B cell (primary cell): ENCODE measurements at regions of chr5 and their contacts with region 1.

Region 1: GRCh38 chr5:134225618-134226440 is at the start of gene PPP2CA:
- DNase-seq: peak; percentile 100
- ATAC-seq: peak; percentile 77
- H3K4me3 ChIP-seq: peak within 1 kb of the TSS; percentile 87 to 100 (median 98)
- H3K4me3 Mint-ChIP-seq: peak within 1 kb of the TSS; percentile 94
- H3K27ac ChIP-seq: peak within 1 kb of the TSS; percentile 95 to 100
- H3K27ac Mint-ChIP-seq: peak within 1 kb of the TSS; percentile 99
- H3K4me1 ChIP-seq: peaks cover 36% of the 10 kb centered on the region in 2 donors
- H3K4me1 Mint-ChIP-seq: peaks cover 51% of the 10 kb centered on the region
- H3K27me3 ChIP-seq: no peaks in the 10 kb centered on the region
- H3K27me3 Mint-ChIP-seq: no peaks in the 10 kb centered on the region
- CTCF ChIP-seq: peak; percentile 27
- total RNA-seq, gene PPP2CA: 86.2 and 100 TPM in 2 replicates

Region 2: DNA sequence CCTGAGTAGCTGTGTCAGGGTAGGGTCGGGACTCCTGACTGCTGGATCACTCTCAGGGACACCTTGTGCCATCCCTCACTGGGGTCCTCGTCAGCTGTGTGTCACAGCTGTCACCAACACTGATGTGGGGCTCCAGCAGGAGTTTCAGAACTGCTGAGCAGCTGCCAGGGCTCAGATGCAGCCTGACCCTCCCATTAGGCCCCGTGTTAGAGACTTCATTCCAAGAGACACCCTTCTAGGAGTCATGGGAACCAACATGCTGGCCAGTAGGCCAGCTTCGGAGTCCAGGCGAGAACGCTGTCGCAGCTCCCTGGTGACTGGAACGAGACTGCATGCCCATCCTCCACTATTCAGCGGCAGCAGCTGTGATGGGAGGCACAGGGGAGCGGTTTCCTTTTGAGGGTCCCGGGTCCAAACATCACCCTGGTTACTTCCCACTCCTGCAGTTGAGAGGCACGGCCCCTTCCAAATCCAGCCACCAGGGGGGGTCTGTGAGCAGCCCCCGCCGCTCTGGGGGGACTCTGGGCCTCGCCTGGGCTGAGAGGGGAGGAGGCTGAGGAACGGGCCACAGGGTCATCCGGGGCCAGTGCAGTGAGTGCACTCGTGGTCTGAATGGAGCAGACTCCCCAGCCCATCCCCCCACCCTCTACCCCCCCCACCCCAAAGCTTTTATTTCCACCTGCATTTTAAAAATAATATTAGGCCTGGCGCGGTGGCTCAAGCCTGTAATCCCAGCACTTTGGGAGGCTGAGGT is 124.0 kb before region 1 on chr5:
- CTCF ChIA-PET with region 1: interaction called, 4 read pairs
- POLR2A ChIA-PET with region 1: interaction called, 5 read pairs
- intact Hi-C with region 1: loop called (anchors 1 kb)
- DNase-seq: peak; percentile 82
- ATAC-seq: peak; percentile 53
- H3K4me3 ChIP-seq: no peak overlapping the region
- H3K4me3 Mint-ChIP-seq: peak overlapping the region; percentile 34
- H3K27ac ChIP-seq: peak overlapping the region; percentile 76 to 88
- H3K27ac Mint-ChIP-seq: peak overlapping the region; percentile 96
- H3K4me1 ChIP-seq: peaks cover 31 to 47% of the 10 kb centered on the region in 2 donors
- H3K4me1 Mint-ChIP-seq: peaks cover 46% of the 10 kb centered on the region
- H3K27me3 ChIP-seq: no peaks in the 10 kb centered on the region
- H3K27me3 Mint-ChIP-seq: no peaks in the 10 kb centered on the region
- CTCF ChIP-seq: peak; percentile 86

Region 3: GRCh38 chr5:134161513-134162395 is 64.1 kb before region 1 on chr5:
- CTCF ChIA-PET with region 1: no interaction called
- POLR2A ChIA-PET with region 1: no interaction called
- intact Hi-C with region 1: no loop called
- DNase-seq: no peak
- ATAC-seq: no peak
- H3K4me3 ChIP-seq: no peak overlapping the region
- H3K4me3 Mint-ChIP-seq: no peak overlapping the region
- H3K27ac ChIP-seq: no peak overlapping the region
- H3K27ac Mint-ChIP-seq: no peak overlapping the region
- H3K4me1 ChIP-seq: no peaks in the 10 kb centered on the region
- H3K4me1 Mint-ChIP-seq: no peaks in the 10 kb centered on the region
- H3K27me3 ChIP-seq: no peaks in the 10 kb centered on the region
- H3K27me3 Mint-ChIP-seq: no peaks in the 10 kb centered on the region
- CTCF ChIP-seq: no peak

Region 4: GRCh38 chr5:134184155-134185135 is 41.4 kb before region 1 on chr5:
- CTCF ChIA-PET with region 1: interaction called, 15 read pairs
- POLR2A ChIA-PET with region 1: interaction called, 3 read pairs
- intact Hi-C with region 1: no loop called
- DNase-seq: peak; percentile 83
- ATAC-seq: peak; percentile 99
- H3K4me3 ChIP-seq: no peak overlapping the region
- H3K4me3 Mint-ChIP-seq: no peak overlapping the region
- H3K27ac ChIP-seq: no peak overlapping the region
- H3K27ac Mint-ChIP-seq: no peak overlapping the region
- H3K4me1 ChIP-seq: peaks cover 0 to 6% of the 10 kb centered on the region in 2 donors
- H3K4me1 Mint-ChIP-seq: peaks cover 5% of the 10 kb centered on the region
- H3K27me3 ChIP-seq: no peaks in the 10 kb centered on the region
- H3K27me3 Mint-ChIP-seq: no peaks in the 10 kb centered on the region
- CTCF ChIP-seq: peak; percentile 96

Region 5: GRCh38 chr5:134446938-134447337 is 221.1 kb after region 1 on chr5:
- CTCF ChIA-PET with region 1: no interaction called
- POLR2A ChIA-PET with region 1: no interaction called
- intact Hi-C with region 1: loop called (anchors 2 kb)
- DNase-seq: peak; percentile 84
- ATAC-seq: peak; percentile 86
- H3K4me3 ChIP-seq: peak overlapping the region in 1 of 5 experiments; percentile 38
- H3K4me3 Mint-ChIP-seq: peak overlapping the region; percentile 79
- H3K27ac ChIP-seq: peak overlapping the region; percentile 47 to 52
- H3K27ac Mint-ChIP-seq: peak overlapping the region; percentile 87
- H3K4me1 ChIP-seq: peaks cover 37 to 42% of the 10 kb centered on the region in 2 donors
- H3K4me1 Mint-ChIP-seq: peaks cover 56% of the 10 kb centered on the region
- H3K27me3 ChIP-seq: no peaks in the 10 kb centered on the region
- H3K27me3 Mint-ChIP-seq: no peaks in the 10 kb centered on the region
- CTCF ChIP-seq: no peak

Region 6: GRCh38 chr5:134637161-134637582 is 411.3 kb after region 1 on chr5:
- CTCF ChIA-PET with region 1: no interaction called
- POLR2A ChIA-PET with region 1: no interaction called
- intact Hi-C with region 1: loop called (anchors 2 kb)
- DNase-seq: no peak
- ATAC-seq: no peak
- H3K4me3 ChIP-seq: no peak overlapping the region
- H3K4me3 Mint-ChIP-seq: no peak overlapping the region
- H3K27ac ChIP-seq: no peak overlapping the region
- H3K27ac Mint-ChIP-seq: no peak overlapping the region
- H3K4me1 ChIP-seq: peaks cover under 1 to 4% of the 10 kb centered on the region in 2 donors
- H3K4me1 Mint-ChIP-seq: peaks cover 6% of the 10 kb centered on the region
- H3K27me3 ChIP-seq: no peaks in the 10 kb centered on the region
- H3K27me3 Mint-ChIP-seq: no peaks in the 10 kb centered on the region
- CTCF ChIP-seq: no peak

Region 7: DNA sequence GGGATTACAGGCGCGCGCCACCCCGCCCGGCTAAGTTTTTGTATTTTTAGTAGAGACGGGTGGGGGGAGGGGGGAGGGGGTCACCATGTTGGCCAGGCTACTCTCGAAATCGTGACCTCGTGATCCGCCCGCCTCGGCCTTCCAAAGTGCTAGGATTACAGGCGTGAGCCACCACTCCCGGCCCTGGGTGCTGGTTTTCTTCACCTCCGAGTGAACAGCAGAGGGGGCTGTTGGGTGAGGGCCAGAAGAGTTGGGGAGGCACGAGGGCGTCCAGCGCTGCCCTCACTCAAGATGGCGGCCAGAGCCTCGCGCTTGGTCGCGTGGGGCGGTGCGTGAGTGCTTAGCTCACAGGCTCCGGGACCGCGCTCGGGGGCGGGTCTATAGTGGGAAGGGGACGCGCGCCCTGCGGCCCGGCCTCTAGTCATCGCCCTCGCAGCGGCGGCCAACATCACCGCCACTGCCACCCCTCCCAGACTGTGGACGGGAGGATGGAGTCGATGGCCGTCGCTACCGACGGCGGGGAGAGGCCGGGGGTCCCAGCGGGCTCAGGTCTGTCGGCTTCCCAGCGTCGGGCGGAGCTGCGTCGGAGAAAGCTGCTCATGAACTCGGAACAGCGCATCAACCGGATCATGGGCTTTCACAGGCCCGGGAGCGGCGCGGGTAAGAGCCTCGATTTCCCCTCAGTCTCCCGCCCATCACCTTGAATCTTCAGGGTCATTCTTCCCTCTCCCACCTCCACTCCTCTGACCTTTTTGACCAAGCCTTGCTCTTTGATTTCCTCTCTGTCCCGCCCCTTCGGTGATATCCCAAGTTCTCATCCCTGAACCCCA is 512.5 kb after region 1 on chr5 and contains the start of gene CAMLG:
- CTCF ChIA-PET with region 1: no interaction called
- POLR2A ChIA-PET with region 1: interaction called, 3 read pairs
- intact Hi-C with region 1: loop called (anchors 1 kb)
- DNase-seq: peak; percentile 98
- ATAC-seq: peak; percentile 97
- H3K4me3 ChIP-seq: peak within 1 kb of the TSS; percentile 69 to 94 (median 89)
- H3K4me3 Mint-ChIP-seq: peak within 1 kb of the TSS; percentile 90
- H3K27ac ChIP-seq: peak within 1 kb of the TSS; percentile 77 to 89
- H3K27ac Mint-ChIP-seq: peak within 1 kb of the TSS; percentile 89
- H3K4me1 ChIP-seq: peaks cover 24 to 42% of the 10 kb centered on the region in 2 donors
- H3K4me1 Mint-ChIP-seq: peaks cover 33% of the 10 kb centered on the region
- H3K27me3 ChIP-seq: no peaks in the 10 kb centered on the region
- H3K27me3 Mint-ChIP-seq: no peaks in the 10 kb centered on the region
- CTCF ChIP-seq: peak; percentile 77
- total RNA-seq, gene CAMLG: 27.5 and 29.7 TPM in 2 replicates